Activated CD4-positive, alpha-beta memory T cell treated with anti-CD3 and anti-CD28 coated beads, Interleukin-2, amount 10 ng/mL, durations not matched to agents 7 days and 5 days (primary cell): ENCODE measurements at regions of chr7 and their contacts with region 1.

Region 1: GRCh38 chr7:25069900-25070443 is 55.1 kb downstream of the CYCS start:
- DNase-seq: peak; percentile 47
- H3K4me3 Mint-ChIP-seq: no peak overlapping the region
- H3K27ac Mint-ChIP-seq: no peak overlapping the region
- H3K4me1 Mint-ChIP-seq: peaks cover 16% of the 10 kb centered on the region
- H3K27me3 Mint-ChIP-seq: no peaks in the 10 kb centered on the region

Region 2: DNA sequence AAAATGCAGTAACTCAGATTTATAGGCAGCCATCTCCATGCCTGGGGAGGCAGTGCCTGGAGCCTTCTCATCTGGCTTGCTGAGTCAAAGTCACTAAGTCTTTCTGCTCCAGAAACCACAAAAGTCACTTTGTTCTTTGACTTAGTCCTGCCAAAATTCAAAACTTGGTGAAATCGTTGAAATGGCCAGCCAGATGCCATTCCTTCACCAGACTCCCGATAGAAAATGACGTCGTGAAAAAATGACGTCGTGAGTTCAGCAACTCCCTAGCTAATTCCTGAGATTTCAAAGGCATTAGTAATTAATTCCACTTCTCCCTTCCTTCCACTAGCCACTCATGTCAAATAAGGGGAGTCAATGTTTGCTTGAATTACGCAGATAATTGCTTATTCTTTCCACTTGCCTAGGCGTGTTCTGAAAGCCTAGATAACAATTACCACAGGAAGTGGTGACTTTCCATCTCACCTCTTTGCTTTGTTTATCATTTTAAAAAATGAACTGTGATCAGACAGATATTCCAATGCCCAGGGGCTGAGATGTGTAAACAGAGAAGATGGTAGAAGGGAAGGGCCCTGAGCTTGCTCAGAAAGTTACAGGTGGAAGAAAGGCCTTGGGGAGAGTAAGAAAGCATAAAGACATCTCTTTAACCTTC is 41.5 kb before region 1 on chr7:
- CTCF ChIA-PET with region 1: interaction called, 11 read pairs
- POLR2A ChIA-PET with region 1: interaction called, 3 read pairs
- DNase-seq: peak; percentile 27
- H3K4me3 Mint-ChIP-seq: peak overlapping the region; percentile 2
- H3K27ac Mint-ChIP-seq: peak overlapping the region; percentile 81
- H3K4me1 Mint-ChIP-seq: peaks cover 49% of the 10 kb centered on the region
- H3K27me3 Mint-ChIP-seq: peaks cover 17% of the 10 kb centered on the region

Region 3: DNA sequence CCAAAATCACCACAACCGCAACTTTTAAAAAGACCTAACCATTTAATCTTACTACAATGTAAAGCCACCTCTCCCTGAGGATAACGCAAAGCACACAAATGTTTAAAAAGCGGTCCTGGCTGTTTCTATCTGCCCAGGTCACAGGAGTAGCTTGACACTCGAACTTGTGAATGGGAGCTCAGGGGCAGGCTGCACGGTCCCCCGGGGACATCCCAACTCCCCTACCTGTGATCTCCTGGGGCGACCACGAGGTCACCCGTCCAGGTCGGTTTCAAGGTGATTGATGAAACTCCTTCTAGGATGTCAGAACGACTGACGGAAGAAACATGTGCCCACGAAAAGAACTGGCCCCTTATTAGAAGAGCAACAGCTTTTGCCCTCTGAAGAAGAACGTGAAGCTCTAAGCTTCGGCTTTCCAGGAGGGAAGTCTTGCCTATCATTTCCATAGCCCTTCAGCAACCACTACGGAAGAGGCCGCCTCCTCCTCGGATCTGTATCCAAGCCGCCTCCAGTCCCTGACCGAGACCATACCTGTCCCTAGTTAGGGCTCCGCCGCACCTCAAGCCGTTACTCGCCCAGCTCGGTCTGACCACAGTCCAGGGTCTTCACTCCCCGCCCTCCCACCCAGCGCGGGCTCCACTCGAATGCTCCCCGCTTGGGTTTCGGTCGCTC is 54.6 kb after region 1 on chr7:
- CTCF ChIA-PET with region 1: no interaction called
- POLR2A ChIA-PET with region 1: no interaction called
- DNase-seq: peak; percentile 33
- H3K4me3 Mint-ChIP-seq: peak overlapping the region; percentile 93
- H3K27ac Mint-ChIP-seq: peak overlapping the region; percentile 97
- H3K4me1 Mint-ChIP-seq: peaks cover 35% of the 10 kb centered on the region
- H3K27me3 Mint-ChIP-seq: peaks cover 2% of the 10 kb centered on the region